ENCODE measurements at regions of chr17 and their contacts with region 1.

Region 1: GRCh38 chr17:65407017-65407416 is 154.4 kb downstream of the AXIN2 start:
- DNase-seq: no peak
- ATAC-seq: no peak
- H3K4me3 ChIP-seq: no peak overlapping the region
- H3K27ac ChIP-seq: no peak overlapping the region
- H3K4me1 ChIP-seq: no peaks in the 10 kb centered on the region
- H3K27me3 ChIP-seq: peaks cover 0 to 3% (median 0%) of the 10 kb centered on the region in 7 donors
- CTCF ChIP-seq: no peak

Region 2: GRCh38 chr17:65446838-65447526 is 40.0 kb after region 1 on chr17:
- intact Hi-C with region 1: loop called in 1 of 10 experiments (anchors 5 kb)
- DNase-seq: no peak
- ATAC-seq: peak in 2 of 8 donors; percentile 38 to 64
- H3K4me3 ChIP-seq: no peak overlapping the region
- H3K27ac ChIP-seq: no peak overlapping the region
- H3K4me1 ChIP-seq: peaks cover 0 to 5% (median 0%) of the 10 kb centered on the region in 9 donors
- H3K27me3 ChIP-seq: peaks cover 0 to 15% (median 0%) of the 10 kb centered on the region in 7 donors
- CTCF ChIP-seq: no peak

Measured in heart right ventricle (tissue), 16 donors.